BJ (cell line): ENCODE measurements at regions of chr16 and their contacts with region 1.

Region 1: DNA sequence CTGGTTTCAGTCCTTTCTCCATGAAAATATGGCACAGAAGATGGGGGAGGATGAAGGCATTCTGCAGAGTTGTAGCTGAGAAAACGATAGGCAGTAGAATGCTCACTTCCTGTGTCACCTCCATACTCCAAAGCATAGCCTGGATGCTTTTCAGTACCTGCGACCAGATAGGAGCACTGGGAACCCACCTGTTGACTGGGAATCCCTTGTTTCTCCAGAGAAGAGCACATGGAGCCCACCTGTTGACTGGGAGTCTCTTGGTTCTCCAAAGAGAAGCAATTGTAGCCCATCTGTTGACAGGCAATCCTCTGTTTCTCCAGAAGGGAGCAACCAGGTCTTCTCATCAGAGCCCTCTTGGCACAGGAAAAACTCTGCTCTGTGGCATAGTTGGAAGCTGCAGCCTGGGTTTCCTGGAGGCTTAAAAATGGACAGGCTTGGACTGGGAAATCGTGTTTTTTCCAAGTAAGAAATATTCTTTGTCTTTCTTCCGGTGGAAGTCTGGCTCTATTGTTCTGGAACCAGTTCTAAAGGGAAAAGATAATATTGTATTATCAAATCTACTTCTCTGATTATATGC is 13.2 kb downstream of the TERF2IP start:
- DNase-seq: no peak
- H3K4me3 ChIP-seq: no peak overlapping the region
- H3K27me3 ChIP-seq: no peaks in the 10 kb centered on the region
- CTCF ChIP-seq: no peak

Region 2: GRCh38 chr16:75647492-75648264 is 13.1 kb before region 1 on chr16 and contains the starts of genes KARS1 and TERF2IP:
- CTCF ChIA-PET with region 1: no interaction called
- POLR2A ChIA-PET with region 1: no interaction called
- DNase-seq: peak; percentile 76
- H3K4me3 ChIP-seq: peak within 1 kb of the TSS; percentile 96
- H3K27me3 ChIP-seq: no peaks in the 10 kb centered on the region
- CTCF ChIP-seq: no peak
- polyA plus RNA-seq, gene KARS1: 118 and 170 TPM in 2 replicates
- polyA plus RNA-seq, gene TERF2IP: 19.1 and 28.9 TPM in 2 replicates

Region 3: DNA sequence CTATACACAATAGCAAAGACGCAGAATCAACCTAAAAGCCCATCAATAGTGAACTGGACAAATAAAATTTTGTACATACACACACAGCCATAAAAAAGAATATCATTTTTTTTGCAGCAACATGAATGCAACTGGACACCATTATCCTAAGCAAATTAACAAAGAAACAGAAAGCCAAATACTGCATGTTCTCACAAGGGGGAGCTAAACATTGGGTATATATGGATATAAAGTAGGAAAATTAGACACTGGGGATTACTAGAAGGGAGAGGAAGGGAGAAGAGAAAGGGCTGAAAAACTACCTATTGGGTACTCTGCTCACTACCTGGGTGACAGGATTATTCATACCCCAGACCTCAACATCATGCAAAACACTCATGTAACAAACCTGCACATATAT is 1745.9 kb after region 1 on chr16:
- CTCF ChIA-PET with region 1: no interaction called
- POLR2A ChIA-PET with region 1: interaction called, 32 read pairs
- DNase-seq: no peak
- H3K4me3 ChIP-seq: no peak overlapping the region
- H3K27me3 ChIP-seq: no peaks in the 10 kb centered on the region
- CTCF ChIP-seq: no peak